CD4-positive, alpha-beta T cell (primary cell): ENCODE measurements at regions of chrX and their contacts with region 1.

Region 1: DNA sequence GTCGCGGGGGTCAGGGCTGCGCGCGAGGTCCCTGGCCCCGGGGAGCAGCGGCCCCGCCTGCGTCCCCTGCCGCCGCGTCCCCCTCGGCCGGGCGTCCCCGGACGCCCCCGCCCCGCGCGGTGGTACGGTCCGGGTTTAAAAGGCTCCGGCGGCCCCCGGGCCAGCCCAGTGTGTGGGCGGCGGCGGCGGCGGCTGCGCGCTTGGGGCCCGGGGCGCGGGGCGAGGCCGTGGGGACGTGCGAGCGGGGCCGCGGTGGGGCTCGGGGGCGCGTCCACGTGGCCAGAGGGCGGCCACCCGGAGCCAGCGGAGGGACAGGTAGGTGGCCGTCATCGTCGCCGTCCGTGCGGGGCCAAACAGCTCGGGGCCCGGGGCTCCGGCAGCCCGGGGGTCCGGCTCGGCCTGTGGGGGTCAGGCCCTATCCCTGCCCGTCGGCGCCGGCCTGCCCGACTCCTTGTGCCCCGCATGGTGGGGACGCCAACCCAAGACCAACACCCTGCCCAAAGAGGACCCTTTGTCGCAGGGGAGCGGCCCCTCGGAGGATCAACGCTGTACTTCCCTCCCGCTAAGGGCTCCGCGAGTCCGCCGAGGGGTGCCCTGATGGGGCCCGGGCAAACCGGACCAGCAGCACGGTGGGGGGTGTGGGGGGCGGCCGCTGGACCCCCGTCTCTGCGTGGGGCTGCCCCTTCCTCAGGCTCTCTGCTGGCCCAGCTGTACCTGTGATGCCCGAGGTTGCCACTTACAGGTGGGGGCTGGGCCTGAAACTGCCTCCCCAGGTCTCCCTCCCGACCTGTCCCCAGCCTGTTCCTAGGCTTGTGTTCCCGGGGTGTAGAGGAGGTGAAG is at the start of gene PLXNA3:
- DNase-seq: peak; percentile 41 to 84 (median 64)
- ATAC-seq: peak; percentile 79
- H3K4me3 ChIP-seq: peak within 1 kb of the TSS; percentile 67
- H3K4me3 Mint-ChIP-seq: peak within 1 kb of the TSS; percentile 92
- H3K27ac ChIP-seq: no peak within 1 kb of the TSS
- H3K27ac Mint-ChIP-seq: peak within 1 kb of the TSS; percentile 83
- H3K4me1 ChIP-seq: peaks cover 23% of the 10 kb centered on the region
- H3K4me1 Mint-ChIP-seq: peaks cover 11% of the 10 kb centered on the region
- H3K27me3 ChIP-seq: no peaks in the 10 kb centered on the region
- H3K27me3 Mint-ChIP-seq: no peaks in the 10 kb centered on the region
- CTCF ChIP-seq: no peak
- total RNA-seq, gene PLXNA3: 35.1 to 38.1 TPM

Region 2: GRCh38 chrX:154478728-154479622 is 20.6 kb after region 1 on chrX and contains the start of gene LAGE3:
- CTCF ChIA-PET with region 1: no interaction called
- POLR2A ChIA-PET with region 1: interaction called, 8 read pairs
- intact Hi-C with region 1: loop called in 1 of 2 experiments (anchors 1 kb)
- DNase-seq: peak; percentile 86 to 96 (median 92)
- ATAC-seq: peak; percentile 90
- H3K4me3 ChIP-seq: peak within 1 kb of the TSS; percentile 56
- H3K4me3 Mint-ChIP-seq: peak within 1 kb of the TSS; percentile 85
- H3K27ac ChIP-seq: peak within 1 kb of the TSS; percentile 72 to 74
- H3K27ac Mint-ChIP-seq: peak within 1 kb of the TSS; percentile 90
- H3K4me1 ChIP-seq: peaks cover 28% of the 10 kb centered on the region
- H3K4me1 Mint-ChIP-seq: peaks cover 26% of the 10 kb centered on the region
- H3K27me3 ChIP-seq: no peaks in the 10 kb centered on the region
- H3K27me3 Mint-ChIP-seq: no peaks in the 10 kb centered on the region
- CTCF ChIP-seq: no peak
- total RNA-seq, gene LAGE3: 5.7 to 6.6 TPM

Region 3: DNA sequence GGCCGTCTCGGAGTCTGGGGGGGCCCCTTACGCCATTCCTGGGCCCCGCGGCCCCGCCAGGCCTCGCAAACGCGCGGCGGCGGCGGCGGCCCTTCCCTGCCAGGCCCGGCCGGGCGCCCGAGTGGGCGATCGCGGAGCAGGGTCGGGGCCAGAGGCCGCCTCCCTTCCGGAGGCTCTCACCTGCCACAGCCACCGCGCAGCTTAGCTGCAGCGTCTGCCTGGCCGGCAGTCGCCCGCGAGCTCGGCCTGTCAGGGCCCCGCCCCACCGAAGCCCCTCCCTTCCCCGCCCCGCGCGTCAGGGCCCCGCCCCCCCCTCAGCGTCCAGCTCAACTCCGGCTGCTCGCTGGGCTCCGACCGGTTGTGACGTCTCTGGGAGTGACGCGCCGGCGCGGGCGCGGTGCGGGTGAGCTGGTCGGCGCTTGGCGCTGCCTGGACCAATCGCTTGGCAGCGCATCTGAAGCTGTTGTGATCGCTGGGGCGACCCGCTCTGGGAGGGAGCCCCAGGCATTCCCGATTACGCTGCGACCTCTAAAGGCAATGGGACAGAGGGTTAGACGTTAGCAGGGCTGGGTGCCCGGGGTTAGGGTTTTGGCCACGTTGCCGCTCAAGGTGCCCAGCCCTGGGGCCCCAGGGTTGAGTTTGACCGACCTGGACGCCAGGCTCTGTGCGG is 32.2 kb after region 1 on chrX and contains the start of gene SLC10A3:
- CTCF ChIA-PET with region 1: no interaction called
- POLR2A ChIA-PET with region 1: interaction called, 8 read pairs
- intact Hi-C with region 1: loop called in 1 of 2 experiments (anchors 1 kb)
- DNase-seq: peak; percentile 68 to 95 (median 84)
- ATAC-seq: peak; percentile 78
- H3K4me3 ChIP-seq: peak within 1 kb of the TSS; percentile 72
- H3K4me3 Mint-ChIP-seq: peak within 1 kb of the TSS; percentile 91
- H3K27ac ChIP-seq: peak within 1 kb of the TSS; percentile 53 to 88
- H3K27ac Mint-ChIP-seq: peak within 1 kb of the TSS; percentile 95
- H3K4me1 ChIP-seq: peaks cover 38% of the 10 kb centered on the region
- H3K4me1 Mint-ChIP-seq: peaks cover 11% of the 10 kb centered on the region
- H3K27me3 ChIP-seq: no peaks in the 10 kb centered on the region
- H3K27me3 Mint-ChIP-seq: no peaks in the 10 kb centered on the region
- CTCF ChIP-seq: no peak
- total RNA-seq, gene SLC10A3: 15.7 to 16.4 TPM